ENCODE measurements at regions of chr5 and their contacts with region 1.

Region 1: DNA sequence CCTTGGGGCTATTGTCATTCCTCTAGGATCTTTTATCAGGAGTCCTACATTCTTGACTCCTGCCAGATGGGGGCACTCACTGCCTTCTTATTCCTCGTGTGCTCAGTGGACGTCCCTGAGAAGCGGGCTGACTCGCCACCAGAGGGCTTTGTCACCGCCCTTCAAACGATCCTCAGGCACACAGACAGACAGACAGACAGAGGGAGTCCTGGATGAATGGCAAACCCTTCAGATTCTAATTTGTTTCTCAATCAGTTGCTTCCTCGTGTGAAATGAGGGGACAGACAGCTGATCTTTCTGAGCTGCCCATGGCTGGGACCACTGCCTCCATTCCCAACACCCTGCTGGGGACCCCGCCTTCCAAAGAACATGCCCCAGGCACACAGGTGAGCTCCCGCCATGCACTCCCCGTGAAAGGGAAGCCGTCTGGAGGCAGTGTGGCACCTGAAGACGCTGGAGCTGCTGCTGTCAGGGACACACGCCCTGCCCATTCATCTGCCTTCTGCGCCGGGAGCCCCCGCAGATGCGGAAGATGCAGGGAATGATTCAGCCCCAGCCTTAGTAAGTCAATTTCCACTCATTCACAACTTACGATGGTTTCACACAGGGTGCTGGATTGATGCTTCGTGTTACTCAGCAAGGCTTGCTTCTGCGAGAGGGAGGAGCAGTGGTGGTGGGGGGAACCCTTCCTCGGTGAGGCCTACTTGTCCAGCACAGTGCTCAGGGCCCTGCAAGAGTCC is 24.9 kb upstream of the SH3PXD2B start:
- DNase-seq: peak; percentile 86 to 88
- H3K4me3 ChIP-seq: no peak overlapping the region
- H3K4me3 Mint-ChIP-seq: no peak overlapping the region
- H3K27ac Mint-ChIP-seq: no peak overlapping the region
- H3K4me1 ChIP-seq: no peaks in the 10 kb centered on the region; the same call in 1 of the 2 replicates
- H3K4me1 Mint-ChIP-seq: no peaks in the 10 kb centered on the region
- H3K27me3 ChIP-seq: no peaks in the 10 kb centered on the region
- H3K27me3 Mint-ChIP-seq: peaks cover 2% of the 10 kb centered on the region
- CTCF ChIP-seq: peak; percentile 91 to 95

Region 2: DNA sequence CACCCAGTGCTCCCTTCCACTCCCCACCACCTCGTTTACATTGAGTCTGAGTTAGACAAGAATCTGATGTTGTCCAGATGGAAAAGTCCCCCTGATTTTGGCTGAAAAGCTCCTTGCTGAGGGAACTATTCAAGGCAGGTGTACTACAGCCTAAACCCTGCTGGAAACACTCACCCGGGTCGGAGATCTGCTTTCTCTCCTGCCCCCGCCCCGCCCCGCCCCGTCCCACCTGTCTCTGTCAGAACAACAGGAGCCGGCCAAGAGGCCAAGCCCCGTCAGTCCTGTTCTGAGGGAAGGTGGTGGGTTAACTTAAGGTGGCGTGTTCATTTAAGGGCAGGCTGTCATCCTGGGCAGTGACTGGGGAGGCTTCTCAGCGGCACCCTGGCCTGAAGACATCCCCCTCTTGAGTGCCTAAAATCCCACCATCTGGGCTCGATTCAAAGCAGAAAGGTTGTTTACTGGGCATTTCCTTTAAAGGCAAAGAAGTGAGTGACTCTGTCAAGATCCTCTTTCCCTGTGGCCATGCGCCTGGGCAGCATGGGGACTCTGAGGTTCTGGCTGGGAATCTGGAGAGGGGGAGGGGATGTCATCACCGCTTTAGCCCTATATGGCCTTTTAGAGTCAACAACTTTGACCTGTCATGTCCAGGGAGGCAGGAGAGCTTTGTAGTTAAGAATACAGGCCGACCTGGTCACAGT is 90.8 kb after region 1 on chr5:
- CTCF ChIA-PET with region 1: no interaction called
- POLR2A ChIA-PET with region 1: no interaction called
- intact Hi-C with region 1: loop called (anchors 10 kb)
- DNase-seq: peak; percentile 52 to 60
- H3K4me3 ChIP-seq: no peak overlapping the region
- H3K4me3 Mint-ChIP-seq: peak overlapping the region; percentile 21
- H3K27ac Mint-ChIP-seq: no peak overlapping the region
- H3K4me1 ChIP-seq: peaks cover 7% of the 10 kb centered on the region
- H3K4me1 Mint-ChIP-seq: peaks cover 15% of the 10 kb centered on the region
- H3K27me3 ChIP-seq: no peaks in the 10 kb centered on the region
- H3K27me3 Mint-ChIP-seq: no peaks in the 10 kb centered on the region
- CTCF ChIP-seq: no peak

Region 3: GRCh38 chr5:172583931-172584511 is 104.8 kb after region 1 on chr5:
- CTCF ChIA-PET with region 1: no interaction called
- POLR2A ChIA-PET with region 1: no interaction called
- intact Hi-C with region 1: loop called (anchors 1 kb)
- DNase-seq: no peak
- H3K4me3 ChIP-seq: no peak overlapping the region
- H3K4me3 Mint-ChIP-seq: no peak overlapping the region
- H3K27ac Mint-ChIP-seq: no peak overlapping the region
- H3K4me1 ChIP-seq: no peaks in the 10 kb centered on the region
- H3K4me1 Mint-ChIP-seq: no peaks in the 10 kb centered on the region
- H3K27me3 ChIP-seq: no peaks in the 10 kb centered on the region
- H3K27me3 Mint-ChIP-seq: peaks cover 18% of the 10 kb centered on the region
- CTCF ChIP-seq: no peak

Region 4: GRCh38 chr5:172640822-172641358 is 161.7 kb after region 1 on chr5 and contains the start of gene NEURL1B:
- CTCF ChIA-PET with region 1: no interaction called
- POLR2A ChIA-PET with region 1: no interaction called
- intact Hi-C with region 1: loop called (anchors 5 kb)
- DNase-seq: peak; percentile 77 to 86
- H3K4me3 ChIP-seq: peak within 1 kb of the TSS; percentile 59
- H3K4me3 Mint-ChIP-seq: peak within 1 kb of the TSS; percentile 61
- H3K27ac Mint-ChIP-seq: no peak within 1 kb of the TSS
- H3K4me1 ChIP-seq: peaks cover 6% of the 10 kb centered on the region; the same call in 1 of the 2 replicates
- H3K4me1 Mint-ChIP-seq: no peaks in the 10 kb centered on the region
- H3K27me3 ChIP-seq: no peaks in the 10 kb centered on the region
- H3K27me3 Mint-ChIP-seq: peaks cover 4% of the 10 kb centered on the region
- CTCF ChIP-seq: no peak
- total RNA-seq, gene NEURL1B: 6.0 and 7.6 TPM in 2 replicates

Region 5: GRCh38 chr5:172666251-172666650 is 187.0 kb after region 1 on chr5:
- CTCF ChIA-PET with region 1: interaction called, 6 read pairs
- POLR2A ChIA-PET with region 1: no interaction called
- intact Hi-C with region 1: loop called (anchors 1 kb)
- DNase-seq: peak; percentile 49 to 59
- H3K4me3 ChIP-seq: no peak overlapping the region
- H3K4me3 Mint-ChIP-seq: no peak overlapping the region
- H3K27ac Mint-ChIP-seq: no peak overlapping the region
- H3K4me1 ChIP-seq: peaks cover 7% of the 10 kb centered on the region
- H3K4me1 Mint-ChIP-seq: no peaks in the 10 kb centered on the region
- H3K27me3 ChIP-seq: no peaks in the 10 kb centered on the region
- H3K27me3 Mint-ChIP-seq: no peaks in the 10 kb centered on the region
- CTCF ChIP-seq: peak in 1 of 2 experiments; percentile 31

Measured in Caco-2 (cell line).